ENCODE measurements at regions of chrX and their contacts with region 1.

Region 1: GRCh38 chrX:13087322-13088155 is 43.1 kb upstream of the FAM9C start:
- DNase-seq: no peak
- ATAC-seq: peak; percentile 49
- H3K4me3 Mint-ChIP-seq: peak overlapping the region; percentile 87
- H3K27ac Mint-ChIP-seq: peak overlapping the region; percentile 98
- H3K4me1 Mint-ChIP-seq: peaks cover 61% of the 10 kb centered on the region
- H3K27me3 Mint-ChIP-seq: no peaks in the 10 kb centered on the region

Region 2: GRCh38 chrX:12946838-12947544 is 140.5 kb before region 1 on chrX:
- POLR2A ChIA-PET with region 1: interaction called, 85 read pairs
- DNase-seq: peak; percentile 55
- ATAC-seq: no peak
- H3K4me3 Mint-ChIP-seq: peak overlapping the region; percentile 73
- H3K27ac Mint-ChIP-seq: peak overlapping the region; percentile 90
- H3K4me1 Mint-ChIP-seq: peaks cover 38% of the 10 kb centered on the region
- H3K27me3 Mint-ChIP-seq: no peaks in the 10 kb centered on the region

Region 3: DNA sequence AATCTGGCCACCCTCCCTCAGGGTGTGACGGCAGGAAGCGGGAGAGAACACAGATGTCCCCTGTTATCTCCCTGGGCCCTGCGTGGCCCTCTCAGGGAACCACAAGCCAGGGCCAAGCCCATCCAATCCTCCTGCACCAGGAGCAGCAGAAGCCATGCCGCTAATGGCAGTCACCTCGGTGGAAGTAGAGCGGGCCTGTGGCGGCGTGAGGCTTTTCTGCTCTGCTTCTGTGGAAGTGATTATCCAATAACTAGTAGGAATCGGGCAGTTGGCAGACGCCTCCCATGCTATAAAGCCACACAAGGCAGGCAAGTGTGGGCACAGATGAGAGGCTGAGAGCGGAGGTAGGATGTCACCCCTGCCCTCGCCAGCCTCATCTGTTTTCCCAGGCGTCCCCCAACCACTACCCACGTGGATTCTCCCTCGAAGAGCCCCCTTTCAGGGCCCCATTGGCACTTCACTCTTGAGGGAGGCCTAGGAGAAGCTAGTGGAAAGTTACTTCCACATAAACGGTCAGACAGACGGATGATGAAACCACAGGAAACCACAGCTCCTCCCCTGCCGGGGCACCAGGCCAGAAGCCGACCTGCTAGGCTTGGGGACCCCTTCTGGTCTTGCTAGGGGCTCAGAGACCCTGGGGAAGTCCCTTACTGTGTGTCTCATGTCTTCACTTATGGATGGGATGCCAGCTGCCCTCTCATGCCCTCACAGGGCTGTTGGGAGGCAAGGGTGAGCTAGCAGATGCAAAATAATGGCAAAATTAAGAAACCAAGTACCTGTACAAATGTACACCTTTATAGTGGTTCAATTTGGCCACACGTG is 131.4 kb before region 1 on chrX:
- POLR2A ChIA-PET with region 1: interaction called, 85 read pairs
- DNase-seq: peak; percentile 71
- ATAC-seq: peak; percentile 25
- H3K4me3 Mint-ChIP-seq: peak overlapping the region; percentile 97
- H3K27ac Mint-ChIP-seq: peak overlapping the region; percentile 97
- H3K4me1 Mint-ChIP-seq: peaks cover 56% of the 10 kb centered on the region
- H3K27me3 Mint-ChIP-seq: no peaks in the 10 kb centered on the region

Region 4: GRCh38 chrX:12974796-12975669 is 112.5 kb before region 1 on chrX and contains the start of gene TMSB4X:
- POLR2A ChIA-PET with region 1: interaction called, 768 read pairs
- DNase-seq: peak; percentile 86
- ATAC-seq: peak; percentile 48
- H3K4me3 Mint-ChIP-seq: peak within 1 kb of the TSS; percentile 97
- H3K27ac Mint-ChIP-seq: peak within 1 kb of the TSS; percentile 98
- H3K4me1 Mint-ChIP-seq: peaks cover 42% of the 10 kb centered on the region
- H3K27me3 Mint-ChIP-seq: no peaks in the 10 kb centered on the region
- total RNA-seq, gene TMSB4X: 8,001 to 8,464 TPM

Region 5: DNA sequence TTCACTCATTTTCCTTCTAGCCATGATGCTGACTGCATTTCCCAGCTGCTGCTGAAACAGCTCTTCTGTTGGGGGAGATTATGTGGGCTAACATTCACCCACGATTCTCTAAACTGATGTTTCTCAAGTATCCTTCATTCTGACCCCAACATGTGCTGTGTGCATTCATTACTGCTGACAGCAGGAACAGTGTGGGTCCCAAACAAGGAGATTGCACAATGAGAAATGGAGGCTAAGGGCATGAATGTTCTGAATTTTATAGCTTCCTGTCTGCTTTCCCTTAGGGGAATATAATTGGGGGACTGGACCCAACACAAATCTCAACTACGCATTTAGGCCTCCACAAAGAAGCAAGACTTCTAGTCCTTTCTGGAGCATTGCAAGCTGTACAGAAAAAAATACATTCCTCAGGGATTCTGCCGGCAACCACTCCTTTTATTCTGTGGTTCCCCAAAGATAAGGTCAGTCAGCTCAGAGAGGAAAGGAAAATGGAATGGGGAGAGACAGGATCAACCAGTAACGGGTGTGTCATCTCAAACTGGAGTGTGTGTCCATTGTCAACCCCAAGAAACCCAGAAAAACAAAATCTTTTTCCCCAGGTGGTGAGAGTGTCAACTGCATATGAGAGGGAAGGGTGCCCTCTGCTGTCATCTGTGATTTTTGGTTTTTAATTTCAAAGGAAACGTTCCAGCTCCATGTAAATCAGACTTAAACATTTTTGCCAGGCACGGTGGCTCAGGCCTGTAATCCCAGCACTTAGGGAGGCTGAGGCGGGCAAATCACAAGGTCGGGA is 400.4 kb after region 1 on chrX:
- POLR2A ChIA-PET with region 1: interaction called, 11 read pairs
- DNase-seq: no peak
- ATAC-seq: peak; percentile 68
- H3K4me3 Mint-ChIP-seq: no peak overlapping the region
- H3K27ac Mint-ChIP-seq: peak overlapping the region; percentile 70
- H3K4me1 Mint-ChIP-seq: peaks cover 24% of the 10 kb centered on the region
- H3K27me3 Mint-ChIP-seq: no peaks in the 10 kb centered on the region